ENCODE measurements at regions of chrX and their contacts with region 1.

Region 1: DNA sequence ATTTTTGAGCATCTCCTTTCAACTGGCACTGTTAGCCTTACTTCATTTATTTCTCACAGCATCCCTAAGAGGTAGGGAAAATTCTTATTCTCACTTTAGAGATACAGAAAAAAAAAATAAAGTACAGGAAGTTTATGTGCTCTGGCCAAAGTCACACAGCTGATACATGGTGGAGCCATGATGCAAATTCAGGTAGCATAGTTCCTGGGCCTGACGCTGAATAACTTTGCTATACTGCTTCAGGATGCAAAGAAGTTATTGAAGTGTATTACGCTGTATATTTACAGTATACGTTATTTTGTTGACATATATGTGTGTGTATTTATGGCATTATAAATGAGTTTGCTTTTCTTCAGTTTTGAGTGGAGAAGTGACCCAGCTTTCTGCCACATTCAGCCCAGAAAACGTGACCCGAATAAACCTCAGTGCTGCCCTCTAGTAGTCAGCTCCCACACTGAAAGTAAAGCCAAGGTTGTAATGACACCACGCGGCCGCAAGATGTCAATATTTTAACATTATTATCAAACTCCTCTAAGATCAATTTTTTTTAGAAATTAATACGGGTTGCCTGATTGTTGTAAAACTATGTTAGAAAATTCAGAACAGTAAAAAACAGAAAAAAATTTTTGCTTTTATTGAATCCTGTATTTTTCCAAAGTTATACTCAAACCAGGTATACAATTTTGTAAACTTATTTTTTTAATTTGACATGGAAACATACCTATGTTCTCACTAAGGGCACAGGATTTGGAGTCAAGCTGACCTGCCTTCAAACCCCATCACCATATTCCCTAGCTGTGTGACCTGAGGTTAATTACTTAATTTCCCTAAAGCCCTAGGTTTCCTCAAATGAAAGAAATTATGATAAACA is 3.8 kb upstream of the GUCY2F start:
- DNase-seq: peak; percentile 38
- H3K4me3 ChIP-seq: no peak overlapping the region; a peak in 1 of 4 replicates
- H3K27ac ChIP-seq: no peak overlapping the region
- H3K4me1 ChIP-seq: no peaks in the 10 kb centered on the region
- H3K27me3 ChIP-seq: peaks cover 11% of the 10 kb centered on the region; the same call in 1 of the 2 replicates
- CTCF ChIP-seq: peak; percentile 99
- EP300 ChIP-seq: no peak
- RAD21 ChIP-seq: peak; percentile 81

Region 2: DNA sequence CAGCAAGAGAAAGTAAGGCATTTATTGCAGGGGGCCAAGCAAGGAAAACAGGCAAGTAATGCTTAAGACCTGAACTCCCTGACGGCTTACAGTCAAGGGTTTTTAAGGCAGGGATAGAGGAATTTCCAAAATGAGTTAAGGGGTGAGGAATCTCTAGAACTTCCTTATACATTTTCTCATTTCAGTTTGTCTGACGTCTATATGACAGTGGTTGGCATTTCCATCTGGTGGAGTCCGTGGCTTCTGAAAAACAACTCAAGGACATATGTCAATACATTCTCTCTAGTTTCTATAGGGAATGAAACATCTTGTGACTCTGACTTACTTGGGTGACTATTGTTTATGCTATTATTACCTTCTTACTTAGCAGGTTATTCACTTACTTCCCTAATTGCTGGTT is 15.5 kb after region 1 on chrX:
- CTCF ChIA-PET with region 1: interaction called, 25 read pairs
- POLR2A ChIA-PET with region 1: no interaction called
- DNase-seq: no peak
- H3K4me3 ChIP-seq: no peak overlapping the region
- H3K27ac ChIP-seq: no peak overlapping the region
- H3K4me1 ChIP-seq: no peaks in the 10 kb centered on the region
- H3K27me3 ChIP-seq: peaks cover 11% of the 10 kb centered on the region; the same call in 1 of the 2 replicates
- CTCF ChIP-seq: no peak
- EP300 ChIP-seq: no peak
- RAD21 ChIP-seq: no peak

Region 3: DNA sequence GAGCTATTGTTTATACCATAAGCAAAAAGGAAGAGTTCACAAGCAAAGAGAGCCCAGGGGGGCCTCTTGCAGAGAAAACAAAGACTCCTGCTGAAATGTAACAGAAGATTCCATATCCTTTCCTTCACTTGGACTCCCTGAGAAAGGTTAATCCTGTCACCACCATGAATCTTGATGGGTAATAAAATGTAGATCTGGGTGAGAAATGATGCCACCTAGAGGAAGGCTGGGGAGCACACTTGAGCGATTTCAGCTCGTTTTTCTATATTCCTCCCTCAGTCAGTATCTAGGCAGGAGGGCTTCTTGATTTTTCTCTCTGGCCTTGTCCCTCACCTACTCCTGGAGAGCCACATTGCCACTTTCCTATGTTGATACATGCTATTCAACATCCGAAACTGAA is 149.5 kb after region 1 on chrX:
- CTCF ChIA-PET with region 1: interaction called, 18 read pairs
- POLR2A ChIA-PET with region 1: no interaction called
- DNase-seq: peak; percentile 32
- H3K4me3 ChIP-seq: no peak overlapping the region
- H3K27ac ChIP-seq: no peak overlapping the region
- H3K4me1 ChIP-seq: no peaks in the 10 kb centered on the region
- H3K27me3 ChIP-seq: no peaks in the 10 kb centered on the region; the same call in 1 of the 2 replicates
- CTCF ChIP-seq: peak; percentile 63
- EP300 ChIP-seq: no peak
- RAD21 ChIP-seq: peak; percentile 34; the same call in 1 of the 2 replicates

Measured in SK-N-SH (cell line).